ENCODE measurements at regions of chr18 and their contacts with region 1.

Region 1: DNA sequence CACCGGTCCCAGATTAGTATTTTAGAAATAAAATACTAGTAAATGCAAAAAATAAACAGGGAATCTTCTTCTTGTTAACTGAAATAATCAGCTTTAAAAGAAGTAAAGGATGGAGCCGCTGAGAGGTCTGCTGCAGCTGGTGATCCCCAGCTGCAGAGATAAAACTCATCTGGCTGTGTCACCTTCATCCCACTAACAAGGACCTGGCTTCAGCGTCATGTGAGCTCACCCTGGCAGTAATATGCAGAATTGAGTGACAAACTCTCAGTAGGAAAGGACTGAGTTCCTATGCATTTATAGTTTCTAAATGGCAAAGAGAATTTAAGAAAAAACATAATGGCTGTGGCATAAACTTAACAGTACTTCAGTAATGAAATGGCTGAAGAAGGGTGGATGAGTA is 27.3 kb downstream of the VPS4B start:
- DNase-seq: no peak
- H3K4me3 ChIP-seq: no peak overlapping the region
- H3K27ac ChIP-seq: no peak overlapping the region
- H3K4me1 ChIP-seq: no peaks in the 10 kb centered on the region
- H3K27me3 ChIP-seq: no peaks in the 10 kb centered on the region
- CTCF ChIP-seq: no peak

Region 2: GRCh38 chr18:63350230-63350629 is 44.7 kb before region 1 on chr18:
- intact Hi-C with region 1: loop called (anchors 5 kb)
- DNase-seq: no peak
- H3K4me3 ChIP-seq: no peak overlapping the region
- H3K27ac ChIP-seq: no peak overlapping the region
- H3K4me1 ChIP-seq: no peaks in the 10 kb centered on the region
- H3K27me3 ChIP-seq: no peaks in the 10 kb centered on the region
- CTCF ChIP-seq: no peak